AG04449 (cell line): ENCODE measurements at regions of chr7 and their contacts with region 1.

Region 1: DNA sequence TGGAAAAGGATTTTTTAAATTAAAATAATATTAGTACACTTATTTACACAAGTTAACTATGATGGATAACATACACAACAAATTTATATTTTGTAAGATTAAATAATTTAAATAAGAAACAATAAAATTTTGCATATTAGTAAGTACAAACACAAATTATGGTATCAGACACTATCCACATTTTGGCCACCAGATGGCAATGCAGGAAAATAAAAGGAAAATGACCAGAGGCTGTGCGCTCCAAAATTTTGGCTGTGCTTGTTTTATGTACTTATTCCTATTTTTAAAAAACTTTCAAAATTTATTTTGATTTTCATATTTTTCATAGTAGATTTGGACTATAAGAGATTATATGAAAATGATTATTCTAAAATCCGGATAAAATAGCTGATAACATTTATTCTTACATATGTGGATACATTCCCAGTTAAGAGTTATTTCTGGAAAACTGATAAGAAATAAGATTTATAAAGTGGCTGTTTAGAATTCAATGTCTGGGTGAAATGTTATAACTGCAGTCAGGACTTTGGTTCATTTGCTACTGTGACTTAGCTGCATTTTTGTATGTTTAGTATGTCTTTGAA is 274.7 kb upstream of the HGF start:
- DNase-seq: no peak
- H3K4me3 ChIP-seq: no peak overlapping the region
- CTCF ChIP-seq: peak; percentile 44

Region 2: GRCh38 chr7:82210416-82211184 is 166.0 kb after region 1 on chr7:
- CTCF ChIA-PET with region 1: no interaction called
- POLR2A ChIA-PET with region 1: no interaction called
- DNase-seq: no peak
- H3K4me3 ChIP-seq: no peak overlapping the region
- CTCF ChIP-seq: no peak

Region 3: DNA sequence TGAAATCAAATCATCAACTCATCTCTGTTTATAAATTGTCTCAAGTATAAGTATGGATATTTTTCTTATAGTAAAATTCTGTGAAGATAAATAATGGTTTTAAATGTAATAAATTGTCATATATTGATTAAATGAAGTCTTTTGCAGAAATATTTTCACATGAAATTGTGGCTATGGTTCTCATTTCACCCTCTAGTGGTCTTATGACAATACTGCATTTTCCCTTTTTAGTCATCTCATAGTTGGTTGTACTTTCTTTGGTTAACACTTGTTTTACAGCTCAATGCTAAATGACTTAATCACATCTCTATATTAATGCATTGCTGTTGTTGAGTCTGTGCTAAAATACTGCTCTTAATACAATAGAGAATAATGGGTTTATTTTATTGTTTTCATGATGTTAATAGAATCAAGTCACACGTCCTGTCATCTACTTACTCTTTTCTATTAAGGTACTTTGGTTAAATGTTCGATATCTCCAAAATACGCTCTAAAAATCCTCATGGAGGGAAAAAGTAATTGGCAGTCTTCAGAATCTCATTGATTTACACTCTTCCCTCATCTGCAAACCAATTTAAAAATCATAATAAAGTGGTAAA is 437.0 kb after region 1 on chr7:
- CTCF ChIA-PET with region 1: interaction called, 28 read pairs
- POLR2A ChIA-PET with region 1: no interaction called
- DNase-seq: no peak
- H3K4me3 ChIP-seq: no peak overlapping the region
- CTCF ChIP-seq: peak; percentile 57

Region 4: DNA sequence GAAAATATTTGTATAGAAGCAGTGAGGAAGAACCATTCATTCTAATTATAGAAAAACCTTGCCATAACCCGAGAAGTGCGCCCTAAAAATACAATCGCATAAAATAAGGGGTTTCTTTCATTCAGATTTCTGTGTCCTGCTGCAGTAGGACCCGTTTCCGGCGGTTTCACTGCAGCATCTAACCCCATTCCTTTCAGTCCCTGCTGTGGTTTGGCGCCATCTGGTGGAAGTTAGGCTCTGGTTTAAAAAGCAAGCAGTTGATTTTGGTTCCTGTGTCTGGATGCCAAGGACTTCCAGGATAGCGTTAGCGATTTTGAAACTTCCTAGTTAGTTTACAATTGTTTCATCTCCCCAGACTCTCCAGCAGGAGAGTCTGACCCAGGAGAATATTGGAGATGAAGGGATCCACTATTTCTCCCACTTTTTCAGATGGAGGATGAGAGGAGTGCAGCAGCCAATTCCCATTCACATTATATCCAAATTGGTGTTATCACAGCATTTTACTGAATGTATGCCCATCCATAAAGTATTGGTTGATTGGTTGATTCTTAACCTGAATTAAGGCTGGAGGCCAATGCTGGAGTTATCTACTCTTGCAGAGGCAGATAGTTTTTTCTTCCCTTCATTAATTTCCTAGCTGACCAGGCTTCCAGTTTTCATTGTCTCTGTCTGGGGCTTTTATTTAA is 527.7 kb after region 1 on chr7:
- CTCF ChIA-PET with region 1: interaction called, 110 read pairs
- POLR2A ChIA-PET with region 1: no interaction called
- DNase-seq: peak; percentile 24
- H3K4me3 ChIP-seq: no peak overlapping the region
- CTCF ChIP-seq: peak; percentile 87

Region 5: GRCh38 chr7:82593780-82594179 is 549.2 kb after region 1 on chr7:
- CTCF ChIA-PET with region 1: interaction called, 10 read pairs
- POLR2A ChIA-PET with region 1: no interaction called
- DNase-seq: no peak
- H3K4me3 ChIP-seq: no peak overlapping the region
- CTCF ChIP-seq: no peak

Region 6: GRCh38 chr7:82605247-82605872 is 560.8 kb after region 1 on chr7:
- CTCF ChIA-PET with region 1: interaction called, 102 read pairs
- POLR2A ChIA-PET with region 1: no interaction called
- DNase-seq: no peak
- H3K4me3 ChIP-seq: no peak overlapping the region
- CTCF ChIP-seq: peak; percentile 66

Region 7: DNA sequence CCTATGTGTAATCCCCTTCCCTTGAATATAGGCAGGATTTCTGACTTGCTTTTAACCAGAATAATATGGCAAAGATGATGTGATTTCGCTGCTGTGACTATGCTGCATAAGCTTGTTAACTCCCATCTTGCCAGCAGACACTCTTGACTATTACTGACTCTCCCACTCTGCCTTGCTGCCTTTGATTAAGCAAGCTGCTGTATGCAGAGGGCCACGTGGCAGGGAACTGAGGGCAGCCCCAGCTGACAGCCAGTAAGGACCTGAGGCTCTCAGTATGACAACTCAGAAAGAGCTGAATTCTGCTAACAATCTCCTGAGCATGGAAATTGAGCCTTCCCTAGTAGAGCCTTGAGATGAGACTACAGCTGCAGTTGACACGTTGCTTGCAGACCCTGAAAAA is 678.4 kb after region 1 on chr7:
- CTCF ChIA-PET with region 1: interaction called, 46 read pairs
- POLR2A ChIA-PET with region 1: no interaction called
- DNase-seq: no peak
- H3K4me3 ChIP-seq: no peak overlapping the region
- CTCF ChIP-seq: no peak

Region 8: GRCh38 chr7:82729172-82730030 is 684.8 kb after region 1 on chr7:
- CTCF ChIA-PET with region 1: interaction called, 46 read pairs
- POLR2A ChIA-PET with region 1: no interaction called
- DNase-seq: no peak
- H3K4me3 ChIP-seq: no peak overlapping the region
- CTCF ChIP-seq: peak; percentile 41